ENCODE measurements at regions of chr12 and their contacts with region 1.

Region 1: GRCh38 chr12:45234139-45234846 is 18.4 kb downstream of the ANO6 start:
- DNase-seq: peak; percentile 98
- H3K4me3 ChIP-seq: peak overlapping the region in 1 of 3 experiments; percentile 20
- H3K27ac ChIP-seq: peak overlapping the region; percentile 100
- H3K4me1 ChIP-seq: peaks cover 52% of the 10 kb centered on the region
- H3K27me3 ChIP-seq: no peaks in the 10 kb centered on the region
- CTCF ChIP-seq: no peak
- POLR2A ChIP-seq: peak; percentile 34

Region 2: DNA sequence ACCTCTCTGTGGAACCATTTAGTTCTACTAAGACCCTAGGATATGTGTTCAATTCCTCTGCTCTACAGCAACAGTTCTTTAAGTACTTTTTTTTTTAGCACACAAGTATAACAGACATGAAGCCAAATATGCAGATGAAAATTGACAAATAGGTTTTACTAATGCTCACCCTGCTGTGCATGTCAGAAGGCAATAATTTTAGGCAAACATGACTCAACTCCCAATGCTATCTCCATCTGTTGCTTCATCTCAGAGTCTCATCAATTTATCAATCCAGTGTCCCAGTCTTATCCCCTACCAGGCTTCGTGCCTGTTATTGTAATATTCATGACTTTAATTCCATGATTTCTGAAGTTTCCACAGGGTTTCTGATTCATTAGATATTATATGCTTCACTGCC is 241.1 kb before region 1 on chr12:
- CTCF ChIA-PET with region 1: no interaction called
- POLR2A ChIA-PET with region 1: no interaction called
- dilution Hi-C with region 1: no loop called
- intact Hi-C with region 1: no loop called
- DNase-seq: no peak
- H3K4me3 ChIP-seq: no peak overlapping the region
- H3K27ac ChIP-seq: no peak overlapping the region
- H3K4me1 ChIP-seq: no peaks in the 10 kb centered on the region
- H3K27me3 ChIP-seq: no peaks in the 10 kb centered on the region
- CTCF ChIP-seq: no peak
- POLR2A ChIP-seq: no peak

Region 3: GRCh38 chr12:45191239-45191638 is 43.1 kb before region 1 on chr12:
- CTCF ChIA-PET with region 1: no interaction called
- POLR2A ChIA-PET with region 1: no interaction called
- dilution Hi-C with region 1: no loop called
- intact Hi-C with region 1: loop called (anchors 2 kb)
- DNase-seq: peak; percentile 35
- H3K4me3 ChIP-seq: no peak overlapping the region
- H3K27ac ChIP-seq: no peak overlapping the region
- H3K4me1 ChIP-seq: peaks cover 20% of the 10 kb centered on the region
- H3K27me3 ChIP-seq: no peaks in the 10 kb centered on the region
- CTCF ChIP-seq: no peak
- POLR2A ChIP-seq: no peak

Region 4: GRCh38 chr12:45260104-45260815 is 26.0 kb after region 1 on chr12:
- CTCF ChIA-PET with region 1: interaction called, 3 read pairs
- POLR2A ChIA-PET with region 1: no interaction called
- dilution Hi-C with region 1: no loop called
- intact Hi-C with region 1: loop called (anchors 2 kb)
- DNase-seq: peak; percentile 68
- H3K4me3 ChIP-seq: no peak overlapping the region
- H3K27ac ChIP-seq: no peak overlapping the region
- H3K4me1 ChIP-seq: peaks cover 24% of the 10 kb centered on the region
- H3K27me3 ChIP-seq: no peaks in the 10 kb centered on the region
- CTCF ChIP-seq: no peak
- POLR2A ChIP-seq: no peak

Region 5: DNA sequence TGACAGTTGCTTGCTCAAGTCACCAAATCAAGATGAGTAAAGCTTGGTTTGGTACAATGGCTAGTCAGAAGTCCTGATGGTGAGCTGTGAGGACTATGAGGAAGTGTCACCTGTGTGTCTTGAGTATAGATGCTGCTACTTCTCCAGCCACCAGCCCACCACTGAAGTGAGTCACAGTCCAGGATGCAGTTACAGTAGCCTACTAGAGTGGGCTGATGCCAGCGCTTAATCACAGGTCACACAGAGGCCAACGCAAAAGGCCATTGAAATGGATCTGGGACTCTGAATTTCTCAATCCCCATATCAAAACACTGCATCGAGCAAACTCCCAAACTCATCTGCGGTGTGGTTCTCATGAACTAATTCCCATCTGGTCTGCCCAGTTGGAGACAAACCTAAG is 204.7 kb after region 1 on chr12:
- CTCF ChIA-PET with region 1: no interaction called
- POLR2A ChIA-PET with region 1: no interaction called
- dilution Hi-C with region 1: no loop called
- intact Hi-C with region 1: no loop called
- DNase-seq: no peak
- H3K4me3 ChIP-seq: no peak overlapping the region
- H3K27ac ChIP-seq: no peak overlapping the region
- H3K4me1 ChIP-seq: peaks cover 14% of the 10 kb centered on the region
- H3K27me3 ChIP-seq: no peaks in the 10 kb centered on the region
- CTCF ChIP-seq: no peak
- POLR2A ChIP-seq: no peak

Measured in endothelial cell of umbilical vein (primary cell).